Lower leg skin (tissue), 4 donors: ENCODE measurements at regions of chr3 and their contacts with region 1.

Region 1: GRCh38 chr3:100864471-100865250 is 128.6 kb downstream of the ABI3BP start:
- DNase-seq: no peak
- H3K4me3 ChIP-seq: no peak overlapping the region
- CTCF ChIP-seq: no peak
- POLR2A ChIP-seq: no peak

Region 2: GRCh38 chr3:99810403-99810802 is 1054.3 kb before region 1 on chr3:
- intact Hi-C with region 1: loop called (anchors 5 kb)
- DNase-seq: no peak
- H3K4me3 ChIP-seq: no peak overlapping the region
- CTCF ChIP-seq: no peak
- POLR2A ChIP-seq: no peak